Lower leg skin (tissue), 4 donors: ENCODE measurements at regions of chr1 and their contacts with region 1.

Region 1: DNA sequence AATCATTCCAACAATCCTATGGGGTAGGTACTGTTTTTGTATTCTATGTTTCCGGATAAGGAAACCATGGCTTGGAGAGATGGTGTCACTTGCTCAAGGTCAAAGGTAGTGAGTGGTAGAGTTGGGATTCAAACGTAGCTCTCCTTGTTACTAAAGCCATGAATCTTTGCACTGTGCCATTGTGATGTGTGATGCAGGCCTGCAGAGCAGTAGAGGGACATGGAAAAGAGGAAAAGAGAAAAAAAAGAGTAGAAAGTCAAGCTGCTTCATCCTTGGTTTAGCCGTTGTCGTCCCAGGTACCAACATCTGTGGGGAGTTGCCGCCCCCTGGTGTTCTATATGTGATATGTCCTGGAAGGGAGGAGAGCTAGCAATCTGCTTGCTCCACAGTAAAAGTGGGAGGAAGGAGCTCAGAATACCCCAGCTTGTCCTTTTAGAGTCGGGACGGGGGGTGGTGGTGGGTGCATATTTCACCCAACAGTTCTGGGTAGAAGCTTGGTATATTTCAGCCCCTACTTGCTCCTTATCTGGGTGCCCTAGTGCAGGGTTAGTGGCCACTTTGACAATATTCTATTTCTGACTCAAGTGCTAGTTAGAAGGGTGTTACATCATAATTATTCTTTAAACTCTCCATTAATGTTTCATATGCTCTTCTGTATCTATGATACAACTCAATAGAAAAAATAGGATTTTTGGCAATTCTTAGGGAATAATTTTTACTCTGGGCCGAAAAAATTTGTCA is 98.4 kb downstream of the EBNA1BP2 start:
- DNase-seq: peak; percentile 74 to 92
- H3K4me3 ChIP-seq: no peak overlapping the region
- CTCF ChIP-seq: peak in 1 of 3 donors; percentile 90
- POLR2A ChIP-seq: no peak

Region 2: DNA sequence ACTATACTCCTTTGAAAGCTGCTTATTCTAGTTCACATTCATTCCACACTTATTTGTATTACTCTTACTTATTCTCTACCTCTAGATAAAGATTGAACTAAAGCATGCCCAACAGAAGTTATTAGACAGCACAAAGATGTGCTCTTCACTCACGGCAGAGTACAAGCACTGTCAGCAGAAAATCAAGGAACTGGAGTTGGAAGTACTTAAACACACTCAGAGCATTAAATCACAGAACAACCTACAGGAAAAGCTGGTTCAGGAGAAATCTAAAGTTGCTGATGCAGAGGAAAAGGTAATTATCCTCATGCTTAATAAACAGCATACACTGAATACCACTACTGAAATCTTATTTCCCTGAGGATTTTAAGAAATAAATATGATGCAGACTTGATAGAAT is 496.7 kb before region 1 on chr1:
- intact Hi-C with region 1: loop called (anchors 10 kb)
- DNase-seq: no peak
- H3K4me3 ChIP-seq: no peak overlapping the region
- CTCF ChIP-seq: no peak
- POLR2A ChIP-seq: no peak

Region 3: DNA sequence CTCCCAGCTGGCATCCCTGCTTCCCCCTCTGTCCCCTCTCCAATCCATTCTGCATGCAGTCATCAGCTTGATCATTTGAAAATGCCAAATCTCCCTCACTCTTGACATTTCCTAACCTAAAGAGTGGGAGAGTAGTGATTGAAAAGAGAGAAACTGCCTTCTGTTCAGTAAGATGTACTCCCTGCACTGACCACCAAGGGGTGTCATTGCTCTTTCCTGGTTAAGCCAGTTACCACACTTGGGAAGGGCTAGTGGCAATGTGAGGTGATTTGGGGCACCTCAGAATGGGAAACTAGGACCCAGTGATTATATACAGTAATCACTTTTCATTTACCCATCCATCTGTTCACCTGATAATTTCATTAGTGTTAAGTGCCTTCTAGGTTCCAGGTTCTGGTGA is 295.8 kb before region 1 on chr1:
- intact Hi-C with region 1: loop called (anchors 10 kb)
- DNase-seq: no peak
- H3K4me3 ChIP-seq: no peak overlapping the region
- CTCF ChIP-seq: peak in 1 of 3 donors; percentile 21
- POLR2A ChIP-seq: no peak

Region 4: DNA sequence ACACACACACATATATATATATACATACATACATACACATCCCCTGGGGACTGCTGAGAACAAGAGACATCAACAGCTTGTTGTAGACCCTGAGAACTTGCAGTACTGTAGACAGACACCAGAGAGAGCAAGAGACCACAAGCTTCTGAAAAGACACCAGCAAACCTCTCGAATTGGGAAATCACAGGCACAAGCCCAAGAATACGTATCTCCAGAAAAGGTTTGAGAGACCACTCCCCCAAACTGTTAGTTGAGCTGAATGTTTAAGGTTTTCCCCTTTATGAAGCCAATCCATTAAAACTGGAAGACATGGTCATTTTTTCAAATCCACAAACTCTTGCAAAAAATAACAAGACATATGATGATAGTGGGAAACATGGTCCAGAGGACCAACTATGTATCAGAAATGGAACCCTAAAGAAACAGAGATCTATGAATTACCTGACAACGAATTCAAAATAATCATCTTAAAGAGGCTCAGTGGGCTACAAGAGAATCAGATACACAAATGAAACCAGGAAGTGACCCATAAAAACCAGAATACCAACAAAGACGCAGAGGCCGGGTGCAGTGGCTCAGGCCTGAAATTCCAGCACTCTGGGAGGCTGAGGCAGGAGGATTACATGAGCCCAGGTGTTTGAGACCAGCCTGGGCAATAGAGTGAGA is 160.1 kb before region 1 on chr1:
- intact Hi-C with region 1: loop called (anchors 5 kb)
- DNase-seq: peak in 1 of 2 donors; percentile 70
- H3K4me3 ChIP-seq: no peak overlapping the region
- CTCF ChIP-seq: peak in 2 of 3 donors; percentile 18 to 87
- POLR2A ChIP-seq: no peak

Region 5: GRCh38 chr1:42931108-42931539 is 142.5 kb before region 1 on chr1:
- intact Hi-C with region 1: loop called (anchors 5 kb)
- DNase-seq: peak; percentile 19 to 83
- H3K4me3 ChIP-seq: no peak overlapping the region
- CTCF ChIP-seq: no peak
- POLR2A ChIP-seq: no peak

Region 6: GRCh38 chr1:43258370-43258769 is 184.7 kb after region 1 on chr1:
- intact Hi-C with region 1: no loop called
- DNase-seq: no peak
- H3K4me3 ChIP-seq: no peak overlapping the region
- CTCF ChIP-seq: no peak
- POLR2A ChIP-seq: no peak